A673 (cell line): ENCODE measurements at regions of chr13 and their contacts with region 1.

Region 1: GRCh38 chr13:91825516-91825915 is 427.1 kb downstream of the GPC5 start:
- DNase-seq: no peak
- H3K4me3 ChIP-seq: no peak overlapping the region
- H3K27ac ChIP-seq: no peak overlapping the region
- H3K4me1 ChIP-seq: no peaks in the 10 kb centered on the region
- H3K27me3 ChIP-seq: no peaks in the 10 kb centered on the region
- CTCF ChIP-seq: no peak

Region 2: DNA sequence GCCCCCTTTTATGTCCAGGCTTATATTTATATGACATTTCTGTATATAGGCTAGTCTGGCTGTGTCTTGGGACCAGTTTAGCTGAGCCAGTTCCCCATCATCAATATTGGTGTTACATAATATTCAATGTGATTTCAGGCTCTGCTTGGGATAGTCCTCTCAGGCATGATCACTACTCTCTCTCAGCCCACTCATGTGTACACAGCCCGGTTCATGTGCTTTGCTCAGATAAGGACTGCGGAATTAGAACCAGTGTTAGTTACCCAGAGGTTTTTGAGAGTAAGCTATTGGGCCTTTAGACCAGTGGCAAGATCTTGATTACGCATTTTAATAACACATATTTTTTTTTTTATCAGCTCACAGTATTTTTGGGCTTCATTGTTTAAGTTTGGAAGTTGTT is 207.2 kb before region 1 on chr13:
- CTCF ChIA-PET with region 1: no interaction called
- POLR2A ChIA-PET with region 1: no interaction called
- intact Hi-C with region 1: no loop called
- DNase-seq: no peak
- H3K4me3 ChIP-seq: no peak overlapping the region
- H3K27ac ChIP-seq: no peak overlapping the region
- H3K4me1 ChIP-seq: no peaks in the 10 kb centered on the region
- H3K27me3 ChIP-seq: no peaks in the 10 kb centered on the region
- CTCF ChIP-seq: no peak

Region 3: DNA sequence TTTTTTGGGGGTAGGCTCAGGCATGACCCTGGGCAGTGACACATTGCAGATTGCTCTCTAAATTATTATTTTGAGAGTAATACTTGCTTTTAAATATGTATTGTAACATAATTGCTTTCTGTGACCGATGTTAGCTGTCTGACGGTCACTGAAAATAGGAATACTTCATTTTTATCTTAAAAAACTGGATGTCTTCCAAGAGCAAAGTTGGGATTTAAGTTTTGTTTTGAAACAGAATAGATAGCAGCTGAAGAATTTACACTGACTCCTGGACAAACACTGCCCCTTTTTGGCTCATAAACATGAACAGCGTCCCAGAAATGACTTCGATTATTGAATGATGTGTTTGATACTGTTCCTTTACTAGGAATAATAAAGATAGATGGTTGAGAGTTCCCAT is 108.8 kb after region 1 on chr13:
- CTCF ChIA-PET with region 1: no interaction called
- POLR2A ChIA-PET with region 1: no interaction called
- intact Hi-C with region 1: loop called (anchors 10 kb)
- DNase-seq: no peak
- H3K4me3 ChIP-seq: no peak overlapping the region
- H3K27ac ChIP-seq: no peak overlapping the region
- H3K4me1 ChIP-seq: no peaks in the 10 kb centered on the region
- H3K27me3 ChIP-seq: no peaks in the 10 kb centered on the region
- CTCF ChIP-seq: no peak

Region 4: GRCh38 chr13:91986761-91987483 is 161.4 kb after region 1 on chr13:
- CTCF ChIA-PET with region 1: no interaction called
- POLR2A ChIA-PET with region 1: no interaction called
- intact Hi-C with region 1: no loop called
- DNase-seq: no peak
- H3K4me3 ChIP-seq: no peak overlapping the region
- H3K27ac ChIP-seq: no peak overlapping the region
- H3K4me1 ChIP-seq: no peaks in the 10 kb centered on the region
- H3K27me3 ChIP-seq: no peaks in the 10 kb centered on the region
- CTCF ChIP-seq: no peak